CD8-positive, alpha-beta T cell (primary cell): ENCODE measurements at regions of chr4 and their contacts with region 1.

Region 1: DNA sequence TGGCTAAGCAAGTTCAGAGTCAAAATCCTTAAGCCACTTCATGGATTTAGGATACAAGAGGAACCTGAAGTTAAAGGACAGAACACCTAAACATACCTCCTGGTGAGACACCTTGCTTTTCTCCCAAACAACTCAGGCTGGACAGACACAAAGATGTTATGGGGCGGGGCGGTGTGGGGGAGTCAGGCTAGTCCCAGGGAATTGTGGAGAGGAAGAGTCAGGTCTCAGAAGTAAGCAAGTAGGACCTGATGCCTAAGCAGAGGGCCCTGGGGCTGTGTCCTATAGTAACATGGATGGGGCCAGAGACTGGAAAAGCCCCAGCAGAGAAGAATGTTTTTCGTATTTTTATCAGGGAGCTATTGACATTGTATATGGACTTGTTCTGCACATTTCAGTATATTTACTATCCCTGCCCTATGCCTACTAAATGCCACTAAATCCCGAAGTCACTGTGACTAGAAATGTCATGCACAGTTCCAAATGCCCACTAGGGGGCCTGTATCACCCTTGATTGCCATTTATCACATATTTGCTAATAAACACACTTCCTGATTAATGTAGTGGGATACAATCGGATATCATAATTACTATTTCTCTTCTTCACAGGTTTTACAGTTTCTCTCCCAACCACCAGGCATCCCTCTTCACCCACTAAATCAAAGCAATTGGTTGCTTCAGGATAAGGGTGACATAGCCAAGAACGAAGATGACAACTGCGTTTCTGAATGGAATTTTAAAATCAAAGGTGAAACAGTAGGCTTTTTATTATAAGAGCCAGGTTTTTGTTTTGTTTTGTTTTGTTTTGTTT is 23.8 kb upstream of the ARHGAP10 start:
- DNase-seq: peak in 7 of 9 experiments; percentile 18 to 75 (median 60)
- ATAC-seq: peak; percentile 69
- H3K4me3 ChIP-seq: no peak overlapping the region
- H3K4me3 Mint-ChIP-seq: no peak overlapping the region
- H3K27ac ChIP-seq: no peak overlapping the region
- H3K27ac Mint-ChIP-seq: no peak overlapping the region
- H3K4me1 ChIP-seq: no peaks in the 10 kb centered on the region
- H3K4me1 Mint-ChIP-seq: peaks cover 2% of the 10 kb centered on the region
- H3K27me3 ChIP-seq: no peaks in the 10 kb centered on the region
- H3K27me3 Mint-ChIP-seq: no peaks in the 10 kb centered on the region
- CTCF ChIP-seq: peak; percentile 93

Region 2: GRCh38 chr4:147160908-147161513 is 547.1 kb before region 1 on chr4:
- CTCF ChIA-PET with region 1: no interaction called
- POLR2A ChIA-PET with region 1: no interaction called
- intact Hi-C with region 1: loop called in 1 of 2 experiments (anchors 10 kb)
- DNase-seq: peak in 2 of 9 experiments; percentile 15 to 25
- ATAC-seq: no peak
- H3K4me3 ChIP-seq: no peak overlapping the region
- H3K4me3 Mint-ChIP-seq: no peak overlapping the region
- H3K27ac ChIP-seq: no peak overlapping the region
- H3K27ac Mint-ChIP-seq: no peak overlapping the region
- H3K4me1 ChIP-seq: no peaks in the 10 kb centered on the region
- H3K4me1 Mint-ChIP-seq: peaks cover 7% of the 10 kb centered on the region
- H3K27me3 ChIP-seq: peaks cover 0 to 9% of the 10 kb centered on the region in 2 experiments
- H3K27me3 Mint-ChIP-seq: peaks cover 23% of the 10 kb centered on the region
- CTCF ChIP-seq: peak; percentile 49

Region 3: GRCh38 chr4:147518846-147519767 is 189.0 kb before region 1 on chr4:
- CTCF ChIA-PET with region 1: interaction called, 3 read pairs
- POLR2A ChIA-PET with region 1: no interaction called
- intact Hi-C with region 1: loop called in 1 of 2 experiments (anchors 5 kb)
- DNase-seq: peak in 7 of 9 experiments; percentile 5 to 66 (median 47)
- ATAC-seq: peak; percentile 74
- H3K4me3 ChIP-seq: no peak overlapping the region
- H3K4me3 Mint-ChIP-seq: no peak overlapping the region
- H3K27ac ChIP-seq: no peak overlapping the region
- H3K27ac Mint-ChIP-seq: no peak overlapping the region
- H3K4me1 ChIP-seq: no peaks in the 10 kb centered on the region
- H3K4me1 Mint-ChIP-seq: no peaks in the 10 kb centered on the region
- H3K27me3 ChIP-seq: no peaks in the 10 kb centered on the region
- H3K27me3 Mint-ChIP-seq: peaks cover 16% of the 10 kb centered on the region
- CTCF ChIP-seq: peak; percentile 76

Region 4: DNA sequence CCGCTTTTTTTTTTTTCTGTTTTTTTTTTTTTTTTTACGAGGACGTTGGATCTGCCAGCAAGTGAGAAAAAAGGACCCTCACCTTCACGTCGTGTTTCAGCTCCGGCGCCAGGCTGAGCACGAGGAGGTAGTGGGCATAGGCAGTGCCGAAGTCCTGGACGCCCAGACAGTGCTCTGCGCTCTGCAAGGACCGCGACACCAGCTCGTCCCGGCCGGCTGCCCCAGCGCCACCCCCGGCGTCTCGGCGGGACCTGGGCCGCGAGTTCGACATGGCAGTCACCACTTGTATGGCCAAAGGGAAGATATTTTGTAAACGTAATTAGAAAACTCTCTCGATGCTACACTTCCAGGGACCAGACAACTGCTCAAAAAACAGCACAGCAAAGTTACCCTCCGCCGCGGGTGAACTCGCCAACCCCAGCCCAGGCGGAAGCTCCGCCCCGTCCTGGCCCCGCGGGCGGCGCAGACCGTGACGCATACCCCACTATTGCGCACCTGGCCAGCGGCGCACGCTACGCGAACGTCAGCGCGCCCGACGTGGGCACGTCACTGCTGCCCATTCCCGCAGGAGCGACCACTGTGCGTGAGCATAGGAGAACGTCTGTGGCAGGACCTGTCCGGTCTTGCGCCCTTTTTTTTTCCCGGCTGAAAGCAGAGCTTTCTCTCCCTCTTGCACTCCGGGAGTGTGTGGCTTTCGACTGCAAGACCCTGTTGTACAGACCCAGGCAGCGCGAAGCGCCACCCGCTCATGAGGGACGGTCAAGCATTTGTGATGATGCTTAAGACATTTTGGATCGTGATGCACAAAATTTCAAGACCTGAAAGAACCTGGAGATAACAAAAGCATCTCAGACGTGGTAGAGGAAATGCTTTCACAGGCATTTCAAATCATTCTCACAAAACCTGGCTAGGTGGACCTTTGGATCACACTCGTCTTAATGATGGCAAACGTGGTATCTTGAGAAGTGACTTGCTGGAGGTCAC is 24.1 kb before region 1 on chr4 and contains the start of gene PRMT9:
- CTCF ChIA-PET with region 1: interaction called, 6 read pairs
- POLR2A ChIA-PET with region 1: no interaction called
- intact Hi-C with region 1: loop called in 1 of 2 experiments (anchors 2 kb)
- DNase-seq: peak; percentile 74 to 94 (median 88)
- ATAC-seq: peak; percentile 97
- H3K4me3 ChIP-seq: peak within 1 kb of the TSS; percentile 68 to 98
- H3K4me3 Mint-ChIP-seq: peak within 1 kb of the TSS; percentile 98
- H3K27ac ChIP-seq: peak within 1 kb of the TSS; percentile 92 to 98
- H3K27ac Mint-ChIP-seq: peak within 1 kb of the TSS; percentile 99
- H3K4me1 ChIP-seq: peaks cover 11% of the 10 kb centered on the region
- H3K4me1 Mint-ChIP-seq: peaks cover 40% of the 10 kb centered on the region
- H3K27me3 ChIP-seq: no peaks in the 10 kb centered on the region
- H3K27me3 Mint-ChIP-seq: peaks cover 8% of the 10 kb centered on the region
- CTCF ChIP-seq: no peak
- total RNA-seq, gene PRMT9: 36.4 to 40.3 TPM

Region 5: GRCh38 chr4:147693218-147693617 is 14.9 kb before region 1 on chr4:
- CTCF ChIA-PET with region 1: interaction called, 13 read pairs
- POLR2A ChIA-PET with region 1: no interaction called
- intact Hi-C with region 1: no loop called
- DNase-seq: no peak
- ATAC-seq: no peak
- H3K4me3 ChIP-seq: no peak overlapping the region
- H3K4me3 Mint-ChIP-seq: no peak overlapping the region
- H3K27ac ChIP-seq: no peak overlapping the region
- H3K27ac Mint-ChIP-seq: no peak overlapping the region
- H3K4me1 ChIP-seq: peaks cover 5% of the 10 kb centered on the region
- H3K4me1 Mint-ChIP-seq: peaks cover 5% of the 10 kb centered on the region
- H3K27me3 ChIP-seq: no peaks in the 10 kb centered on the region
- H3K27me3 Mint-ChIP-seq: peaks cover 22% of the 10 kb centered on the region
- CTCF ChIP-seq: no peak

Region 6: GRCh38 chr4:147723326-147723725 is 15.3 kb after region 1 on chr4:
- CTCF ChIA-PET with region 1: interaction called, 11 read pairs
- POLR2A ChIA-PET with region 1: no interaction called
- intact Hi-C with region 1: no loop called
- DNase-seq: no peak
- ATAC-seq: no peak
- H3K4me3 ChIP-seq: no peak overlapping the region
- H3K4me3 Mint-ChIP-seq: no peak overlapping the region
- H3K27ac ChIP-seq: no peak overlapping the region
- H3K27ac Mint-ChIP-seq: no peak overlapping the region
- H3K4me1 ChIP-seq: no peaks in the 10 kb centered on the region
- H3K4me1 Mint-ChIP-seq: no peaks in the 10 kb centered on the region
- H3K27me3 ChIP-seq: no peaks in the 10 kb centered on the region
- H3K27me3 Mint-ChIP-seq: peaks cover 2% of the 10 kb centered on the region
- CTCF ChIP-seq: no peak

Region 7: DNA sequence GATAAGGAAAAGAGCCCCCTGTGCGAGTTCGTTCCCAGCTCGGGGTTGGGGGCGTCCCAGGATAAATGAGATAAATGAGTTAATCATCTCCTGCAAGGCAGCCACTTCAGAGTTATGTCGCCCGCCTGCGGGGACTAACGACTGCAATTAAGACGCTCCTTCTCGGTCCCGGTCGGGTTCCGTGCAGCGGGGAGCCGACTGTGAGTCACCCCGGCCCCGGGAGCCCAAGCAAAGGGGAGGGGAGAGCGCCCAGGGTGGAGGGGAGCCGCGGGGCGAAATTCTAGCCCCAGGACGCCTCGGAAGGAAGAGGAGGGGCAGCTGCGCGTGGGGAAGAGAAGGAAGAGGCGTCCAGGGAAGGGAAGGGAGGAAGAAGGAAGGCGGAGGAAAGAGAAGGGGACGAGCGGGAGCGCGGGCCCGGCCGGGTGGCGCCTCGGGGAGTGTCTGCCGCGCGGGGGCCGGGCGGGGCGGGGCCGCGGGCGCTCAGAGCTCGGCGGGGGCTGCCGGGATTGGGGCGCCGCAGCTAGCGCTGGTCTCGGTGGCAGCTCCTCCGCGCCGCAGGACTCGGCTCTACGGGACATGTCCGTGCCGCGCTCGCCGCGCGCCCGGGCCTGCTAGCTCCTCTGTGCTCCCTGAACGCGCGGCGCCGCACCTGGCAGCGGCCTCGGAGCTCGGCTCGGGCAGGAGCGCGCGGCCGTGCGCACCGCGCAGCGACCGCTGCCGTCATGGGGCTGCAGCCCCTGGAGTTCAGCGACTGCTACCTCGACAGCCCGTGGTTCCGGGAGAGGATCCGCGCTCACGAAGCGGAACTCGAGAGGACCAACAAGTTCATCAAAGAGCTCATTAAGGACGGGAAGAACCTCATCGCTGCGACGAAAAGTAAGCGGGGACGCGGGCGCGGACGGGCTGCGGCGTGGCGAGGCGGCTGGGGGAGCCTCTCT is 23.8 kb after region 1 on chr4 and contains the start of gene ARHGAP10:
- CTCF ChIA-PET with region 1: interaction called, 11 read pairs
- POLR2A ChIA-PET with region 1: interaction called, 3 read pairs
- intact Hi-C with region 1: loop called (anchors 1 to 2 kb)
- DNase-seq: peak; percentile 18 to 79 (median 72)
- ATAC-seq: peak; percentile 66
- H3K4me3 ChIP-seq: peak within 1 kb of the TSS; percentile 91
- H3K4me3 Mint-ChIP-seq: peak within 1 kb of the TSS; percentile 90
- H3K27ac ChIP-seq: peak within 1 kb of the TSS; percentile 55 to 60
- H3K27ac Mint-ChIP-seq: peak within 1 kb of the TSS; percentile 83
- H3K4me1 ChIP-seq: peaks cover 18% of the 10 kb centered on the region
- H3K4me1 Mint-ChIP-seq: peaks cover 32% of the 10 kb centered on the region
- H3K27me3 ChIP-seq: no peaks in the 10 kb centered on the region
- H3K27me3 Mint-ChIP-seq: peaks cover 2% of the 10 kb centered on the region
- CTCF ChIP-seq: no peak
- total RNA-seq, gene ARHGAP10: 7.2 to 7.4 TPM